HEK293 (cell line): ENCODE measurements at regions of chr7 and their contacts with region 1.

Region 1: DNA sequence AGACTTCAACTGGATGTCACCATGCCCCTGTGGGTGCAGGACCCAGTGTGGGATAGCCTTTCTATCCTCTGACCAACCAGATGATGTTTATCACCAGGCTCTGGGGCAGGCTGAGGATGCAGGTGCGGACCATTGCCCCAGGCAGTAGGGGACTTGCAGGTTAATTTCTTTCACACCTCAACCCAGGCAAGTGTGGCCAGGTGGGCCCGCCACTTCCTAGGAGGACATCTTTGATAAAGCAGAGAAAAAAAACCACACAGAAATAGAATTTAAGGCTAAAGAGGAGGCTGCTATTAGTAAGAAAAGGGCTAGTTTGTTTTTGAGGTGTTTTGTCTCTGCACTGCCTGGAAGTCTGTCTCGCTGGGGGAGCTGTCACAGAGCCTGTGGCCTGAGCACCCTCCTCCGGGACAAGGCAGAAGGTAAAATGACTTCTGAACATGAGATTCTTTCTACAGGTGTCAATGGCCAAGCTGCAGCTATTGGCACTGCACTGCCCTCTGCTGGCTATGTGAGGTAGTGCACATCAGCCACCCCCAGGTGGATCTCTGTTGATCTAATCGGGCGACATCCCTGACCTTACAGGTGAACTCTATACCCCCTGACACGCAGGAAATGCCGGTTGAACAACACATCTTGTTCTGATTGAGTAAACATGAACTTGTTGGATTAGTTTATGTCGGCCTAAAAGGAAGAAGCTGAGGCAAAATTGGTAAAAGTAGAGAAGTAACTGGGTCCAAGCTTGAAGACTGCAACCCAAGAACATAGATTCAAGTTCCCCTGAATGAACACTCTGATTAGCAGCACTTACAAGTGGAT is 21.0 kb downstream of the UPP1 start:
- H3K4me3 ChIP-seq: no peak overlapping the region
- H3K27ac ChIP-seq: no peak overlapping the region
- H3K4me1 ChIP-seq: no peaks in the 10 kb centered on the region
- CTCF ChIP-seq: peak; percentile 81

Region 2: GRCh38 chr7:47227762-47228177 is 882.3 kb before region 1 on chr7:
- CTCF ChIA-PET with region 1: no interaction called
- POLR2A ChIA-PET with region 1: no interaction called
- H3K4me3 ChIP-seq: no peak overlapping the region
- H3K27ac ChIP-seq: no peak overlapping the region
- H3K4me1 ChIP-seq: peaks cover 4% of the 10 kb centered on the region; the same call in 1 of the 2 replicates
- CTCF ChIP-seq: no peak

Region 3: DNA sequence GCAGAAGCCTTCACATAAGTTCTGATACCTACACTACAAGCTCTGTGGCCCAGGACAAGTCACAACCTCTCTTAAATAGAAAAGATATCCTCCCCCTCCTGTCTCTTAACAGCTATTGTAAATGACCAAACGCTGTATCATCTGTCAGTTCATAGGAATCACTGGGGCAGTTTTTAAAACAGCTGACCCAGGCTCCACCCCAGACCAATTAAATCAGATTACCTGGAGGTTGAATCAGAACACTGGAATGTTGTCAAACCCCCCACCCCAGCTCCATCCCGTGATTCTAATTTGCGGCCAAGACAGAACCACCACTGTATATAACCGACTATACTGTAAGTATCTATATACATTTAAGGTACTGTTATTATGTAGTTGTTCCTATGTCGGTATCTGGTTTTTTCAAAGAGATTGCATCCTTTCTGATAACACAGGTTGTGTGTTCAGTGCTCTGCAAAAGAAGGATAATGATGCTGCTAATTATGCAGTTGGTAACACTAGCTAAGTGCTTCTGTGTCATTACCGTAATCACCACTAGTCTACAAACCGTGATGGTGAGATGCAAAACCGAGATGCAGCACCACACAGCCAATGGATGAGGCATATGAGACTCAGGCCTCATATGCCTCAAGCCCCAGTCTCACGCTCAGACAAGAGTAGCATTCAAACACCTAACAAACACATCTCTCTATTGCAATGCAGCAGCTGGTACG is 575.6 kb before region 1 on chr7:
- CTCF ChIA-PET with region 1: no interaction called
- POLR2A ChIA-PET with region 1: no interaction called
- H3K4me3 ChIP-seq: no peak overlapping the region
- H3K27ac ChIP-seq: no peak overlapping the region
- H3K4me1 ChIP-seq: no peaks in the 10 kb centered on the region
- CTCF ChIP-seq: no peak

Region 4: DNA sequence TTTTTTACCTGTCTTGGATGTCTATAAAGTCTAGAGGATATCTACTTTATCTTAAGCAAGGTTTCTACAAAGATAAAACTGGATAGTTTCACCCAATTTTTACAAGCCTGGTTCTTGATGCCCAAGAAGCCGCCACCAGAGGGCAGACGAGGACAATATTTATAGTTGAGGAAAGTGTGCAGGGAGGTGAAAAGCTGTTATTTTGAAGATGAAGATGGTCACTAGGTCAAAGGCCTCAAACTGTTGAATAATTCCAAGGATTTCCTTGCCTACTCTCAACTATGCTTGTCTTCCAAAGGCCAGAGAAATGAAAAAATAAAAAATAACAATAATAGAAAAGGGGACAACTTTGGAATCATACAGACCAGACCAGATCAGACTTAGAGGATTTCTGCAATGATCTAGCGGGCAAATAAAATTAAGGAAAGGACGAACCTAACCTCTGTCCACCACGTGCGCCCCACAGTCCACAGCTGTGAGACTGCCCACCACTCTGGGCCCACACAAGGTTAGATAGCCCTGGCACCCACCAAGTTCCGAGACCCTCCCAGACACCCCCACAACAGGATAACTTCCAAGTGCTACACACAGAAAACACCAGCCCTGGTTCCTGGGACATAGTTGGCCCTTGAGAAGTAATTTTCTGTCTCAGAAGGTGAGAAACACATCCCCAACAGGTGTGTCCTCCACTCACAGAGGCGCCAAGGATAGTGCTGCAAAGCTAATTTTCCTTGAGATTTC is 164.6 kb before region 1 on chr7:
- CTCF ChIA-PET with region 1: interaction called, 35 read pairs
- POLR2A ChIA-PET with region 1: no interaction called
- H3K4me3 ChIP-seq: no peak overlapping the region
- H3K27ac ChIP-seq: no peak overlapping the region
- H3K4me1 ChIP-seq: no peaks in the 10 kb centered on the region
- CTCF ChIP-seq: no peak

Region 5: DNA sequence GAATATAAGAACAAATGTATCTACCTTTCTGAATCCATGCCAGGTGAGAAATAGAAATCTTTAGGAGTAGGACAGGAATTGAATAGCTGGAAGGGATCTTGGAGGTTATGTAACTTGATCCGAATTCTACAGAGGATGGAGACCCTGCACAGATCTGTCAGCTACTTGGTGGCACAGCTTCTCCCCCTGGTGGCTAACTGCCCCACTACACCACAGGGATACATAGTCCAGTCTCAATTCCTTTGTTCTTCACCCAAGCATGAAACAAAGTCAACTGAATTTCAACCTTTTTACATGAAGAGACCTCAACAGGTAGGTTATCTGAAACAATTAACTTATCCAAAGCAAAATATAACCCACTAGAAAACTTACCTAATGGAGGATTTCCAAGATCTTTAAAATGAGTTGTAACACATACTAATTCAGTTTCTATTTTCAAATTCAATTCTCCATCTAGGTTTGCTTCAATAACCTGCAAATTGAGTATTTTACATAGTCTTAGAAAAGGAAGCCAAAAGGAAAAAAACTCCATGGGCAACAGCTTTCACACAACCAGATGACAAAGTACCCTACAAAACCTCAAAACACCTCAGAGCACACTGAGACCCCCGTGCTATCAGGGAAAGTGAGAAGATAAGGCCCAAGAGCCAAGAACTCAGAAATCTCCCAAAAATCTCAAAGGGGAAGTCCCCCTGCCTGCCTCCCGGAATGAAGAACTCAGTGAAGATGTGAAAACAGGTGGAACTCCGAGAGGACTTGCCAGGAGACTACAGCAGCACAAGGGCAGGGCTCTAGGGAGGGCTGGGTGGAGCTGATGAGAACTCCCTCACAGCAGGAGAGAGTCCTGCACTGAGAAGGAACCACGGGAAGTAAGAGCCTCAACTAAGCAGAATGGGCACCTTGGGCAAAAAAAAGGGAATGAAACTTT is 140.9 kb before region 1 on chr7:
- CTCF ChIA-PET with region 1: interaction called, 11 read pairs
- POLR2A ChIA-PET with region 1: no interaction called
- H3K4me3 ChIP-seq: no peak overlapping the region
- H3K27ac ChIP-seq: no peak overlapping the region
- H3K4me1 ChIP-seq: no peaks in the 10 kb centered on the region
- CTCF ChIP-seq: 0 out of 2 replicates have a peak, but pooled peaks have one; percentile 27

Region 6: GRCh38 chr7:47979145-47979831 is 130.8 kb before region 1 on chr7 and contains the start of gene HUS1:
- CTCF ChIA-PET with region 1: interaction called, 17 read pairs
- POLR2A ChIA-PET with region 1: interaction called, 3 read pairs
- H3K4me3 ChIP-seq: peak within 1 kb of the TSS; percentile 95
- H3K27ac ChIP-seq: peak within 1 kb of the TSS; percentile 87
- H3K4me1 ChIP-seq: no peaks in the 10 kb centered on the region
- CTCF ChIP-seq: 0 out of 2 replicates have a peak, but pooled peaks have one; percentile 29

Region 7: DNA sequence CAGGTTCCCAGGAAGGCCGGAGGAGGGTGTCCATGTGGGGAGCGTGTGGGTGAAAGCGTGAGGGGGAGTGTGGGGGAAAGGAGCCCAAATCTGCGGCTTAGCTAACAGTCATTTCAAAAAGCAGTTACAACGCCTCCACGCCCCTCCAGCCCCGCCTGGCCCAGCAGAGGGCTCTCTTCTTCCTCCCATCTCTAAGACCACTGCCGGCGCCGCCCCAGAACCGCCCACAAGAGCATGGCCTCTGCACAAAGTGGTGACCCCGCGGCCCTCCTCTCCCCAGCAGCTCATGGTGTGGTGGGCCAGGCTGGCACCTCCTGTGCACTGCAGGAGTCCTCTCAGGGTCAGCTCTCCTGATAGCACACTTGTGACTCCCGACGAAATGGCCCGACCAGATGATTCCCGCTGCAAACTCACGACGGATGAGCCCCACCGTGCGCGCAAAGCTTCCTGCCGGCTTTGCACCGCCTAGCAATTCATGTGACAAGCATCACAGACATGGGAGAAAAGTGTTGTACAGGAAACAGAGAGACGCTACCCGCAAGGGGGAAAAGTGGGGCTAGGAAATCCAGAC is 118.2 kb before region 1 on chr7:
- CTCF ChIA-PET with region 1: interaction called, 88 read pairs
- POLR2A ChIA-PET with region 1: interaction called, 13 read pairs
- H3K4me3 ChIP-seq: peak overlapping the region; percentile 18
- H3K27ac ChIP-seq: no peak overlapping the region
- H3K4me1 ChIP-seq: no peaks in the 10 kb centered on the region
- CTCF ChIP-seq: peak; percentile 59

Region 8: DNA sequence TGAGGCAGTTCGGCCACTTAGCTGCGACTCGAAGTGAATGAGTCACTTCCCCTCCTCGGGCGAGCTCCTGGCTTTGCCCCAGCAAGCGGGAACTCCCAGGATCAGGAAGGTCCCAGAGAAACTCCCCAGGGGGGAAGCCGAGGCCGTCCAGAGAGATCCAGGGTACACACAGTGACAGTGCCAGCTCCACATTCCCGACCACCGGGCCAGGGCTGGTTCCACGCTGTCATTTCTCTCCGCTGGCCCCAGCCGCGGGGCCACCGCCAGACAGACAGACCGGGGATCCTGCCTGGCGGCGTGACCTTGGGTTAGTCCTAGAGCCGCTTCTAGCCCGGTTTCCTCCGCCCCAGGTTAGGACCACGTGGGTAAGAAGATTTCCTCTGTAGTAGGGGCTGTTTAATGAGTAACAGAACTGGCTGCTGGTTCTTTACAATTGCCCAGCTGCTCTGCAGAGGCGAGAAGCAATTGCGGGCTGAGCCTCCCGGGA is 21.5 kb before region 1 on chr7:
- CTCF ChIA-PET with region 1: interaction called, 5 read pairs
- POLR2A ChIA-PET with region 1: interaction called, 11 read pairs
- H3K4me3 ChIP-seq: peak overlapping the region; percentile 76
- H3K27ac ChIP-seq: peak overlapping the region; percentile 97
- H3K4me1 ChIP-seq: peaks cover 10% of the 10 kb centered on the region
- CTCF ChIP-seq: no peak

Region 9: GRCh38 chr7:48209004-48209600 is 99.0 kb after region 1 on chr7:
- CTCF ChIA-PET with region 1: no interaction called
- POLR2A ChIA-PET with region 1: no interaction called
- H3K4me3 ChIP-seq: no peak overlapping the region
- H3K27ac ChIP-seq: no peak overlapping the region
- H3K4me1 ChIP-seq: no peaks in the 10 kb centered on the region
- CTCF ChIP-seq: no peak